ENCODE measurements at regions of chr5 and their contacts with region 1.

Region 1: GRCh38 chr5:151051066-151051930 is 29.5 kb downstream of the TNIP1 start:
- DNase-seq: peak; percentile 84
- H3K4me3 ChIP-seq: no peak overlapping the region
- H3K27ac ChIP-seq: no peak overlapping the region
- H3K4me1 ChIP-seq: peaks cover 4% of the 10 kb centered on the region
- H3K27me3 ChIP-seq: no peaks in the 10 kb centered on the region
- CTCF ChIP-seq: peak; percentile 77

Region 2: DNA sequence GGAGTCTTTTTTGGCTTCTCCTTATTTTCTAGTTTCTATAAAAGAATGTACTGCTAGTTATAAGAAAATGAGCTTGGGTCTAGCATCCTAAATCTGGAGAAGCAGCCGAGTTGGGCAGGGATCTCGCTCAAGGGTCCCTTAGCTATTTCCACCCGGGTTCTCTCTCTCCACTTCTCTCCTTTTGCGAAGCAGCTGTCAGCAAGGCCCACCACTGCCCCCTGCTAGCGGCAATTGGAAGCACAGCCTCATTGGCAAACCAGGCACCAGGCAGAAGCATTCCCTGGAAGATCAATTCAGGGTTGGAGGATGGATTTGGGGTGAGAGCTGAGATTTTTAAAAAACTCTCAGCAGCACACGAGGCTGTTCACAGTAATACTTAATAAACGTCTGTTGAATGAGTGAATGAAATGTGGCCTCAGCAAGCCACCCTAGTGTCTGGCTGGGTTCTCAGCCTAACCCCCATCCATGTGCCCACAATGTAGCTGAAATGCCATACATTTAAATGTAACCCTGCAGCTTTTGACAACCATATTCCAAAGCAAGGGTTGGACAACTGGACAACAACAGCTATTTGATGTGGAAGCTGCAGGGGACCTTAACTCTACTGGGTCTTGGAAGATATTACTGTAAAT is 64.1 kb after region 1 on chr5:
- intact Hi-C with region 1: loop called (anchors 1 kb)
- DNase-seq: peak; percentile 85
- H3K4me3 ChIP-seq: no peak overlapping the region
- H3K27ac ChIP-seq: no peak overlapping the region
- H3K4me1 ChIP-seq: no peaks in the 10 kb centered on the region
- H3K27me3 ChIP-seq: no peaks in the 10 kb centered on the region
- CTCF ChIP-seq: peak; percentile 97

Region 3: GRCh38 chr5:151164686-151165392 is 113.5 kb after region 1 on chr5:
- intact Hi-C with region 1: loop called (anchors 5 kb)
- DNase-seq: peak; percentile 82
- H3K4me3 ChIP-seq: no peak overlapping the region
- H3K27ac ChIP-seq: no peak overlapping the region
- H3K4me1 ChIP-seq: no peaks in the 10 kb centered on the region
- H3K27me3 ChIP-seq: no peaks in the 10 kb centered on the region
- CTCF ChIP-seq: peak; percentile 91

Region 4: GRCh38 chr5:151196556-151197290 is 145.4 kb after region 1 on chr5:
- intact Hi-C with region 1: no loop called
- DNase-seq: no peak
- H3K4me3 ChIP-seq: no peak overlapping the region
- H3K27ac ChIP-seq: no peak overlapping the region
- H3K4me1 ChIP-seq: no peaks in the 10 kb centered on the region
- H3K27me3 ChIP-seq: no peaks in the 10 kb centered on the region
- CTCF ChIP-seq: no peak

Region 5: DNA sequence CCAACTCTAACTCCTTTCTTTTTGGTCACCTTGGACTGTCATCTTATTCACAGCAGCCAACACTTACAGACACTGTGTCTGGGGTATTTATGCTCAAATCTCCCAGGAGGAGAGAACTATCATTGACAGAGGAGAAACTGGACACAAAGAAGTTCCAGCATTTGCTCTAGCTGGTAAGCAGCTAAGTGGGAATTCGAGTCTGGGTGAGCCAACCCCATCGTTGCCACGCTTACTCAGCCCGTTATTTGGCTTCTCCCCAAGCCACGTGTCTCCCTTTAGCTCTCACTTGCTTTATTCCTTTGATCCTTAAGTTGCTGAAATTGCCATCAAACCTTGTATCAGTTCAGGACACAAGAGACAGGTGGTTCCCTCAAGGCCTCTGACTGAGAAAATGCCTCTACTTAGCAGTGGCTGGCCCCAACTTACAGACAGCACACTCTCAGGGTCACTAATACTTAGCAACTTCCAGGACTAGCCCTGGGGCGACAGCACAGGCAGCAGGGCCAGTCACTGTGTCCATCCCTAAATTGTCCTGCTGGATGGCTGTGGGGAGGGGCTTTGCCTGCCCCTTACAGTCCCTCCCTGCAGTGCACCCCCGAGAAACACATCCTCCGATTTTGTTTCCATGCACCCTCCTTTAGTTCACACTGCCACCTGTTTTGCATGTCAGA is 294.6 kb after region 1 on chr5:
- intact Hi-C with region 1: no loop called
- DNase-seq: no peak
- H3K4me3 ChIP-seq: no peak overlapping the region
- H3K27ac ChIP-seq: no peak overlapping the region
- H3K4me1 ChIP-seq: no peaks in the 10 kb centered on the region
- H3K27me3 ChIP-seq: no peaks in the 10 kb centered on the region
- CTCF ChIP-seq: no peak

Region 6: DNA sequence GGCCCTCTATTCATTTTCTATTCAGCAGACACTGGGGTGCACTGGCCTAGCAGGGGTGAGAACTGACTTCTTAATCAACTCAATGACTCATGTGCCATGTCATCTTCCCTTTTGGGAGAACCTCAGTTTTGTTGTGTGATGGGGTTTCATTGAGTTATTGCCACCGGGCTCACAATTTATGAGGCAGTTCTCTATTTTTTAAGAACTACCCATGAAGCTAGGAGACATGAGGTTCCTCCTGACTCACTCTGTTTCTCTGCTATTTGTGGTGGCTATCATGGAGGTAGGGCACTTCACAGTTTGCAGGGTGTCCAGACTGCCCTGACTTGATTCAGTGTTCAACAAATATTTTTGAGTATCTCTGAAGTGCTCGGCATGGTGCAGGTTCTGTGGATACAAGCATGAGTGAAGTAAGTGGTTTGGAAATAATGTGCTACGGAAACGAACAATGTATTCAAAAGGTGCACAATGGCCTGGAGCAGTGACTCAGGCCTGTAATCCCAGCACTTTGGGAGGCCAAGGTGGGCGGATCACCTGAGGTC is 596.1 kb after region 1 on chr5:
- intact Hi-C with region 1: no loop called
- DNase-seq: no peak
- H3K4me3 ChIP-seq: no peak overlapping the region
- H3K27ac ChIP-seq: no peak overlapping the region
- H3K4me1 ChIP-seq: no peaks in the 10 kb centered on the region
- H3K27me3 ChIP-seq: no peaks in the 10 kb centered on the region
- CTCF ChIP-seq: no peak

Measured in colonic mucosa (tissue), 4 donors.